Heart left ventricle (tissue), 16 donors: ENCODE measurements at regions of chr3 and their contacts with region 1.

Region 1: GRCh38 chr3:159964166-159964973 is 24.3 kb upstream of the IL12A start:
- DNase-seq: no peak
- ATAC-seq: no peak
- H3K4me3 ChIP-seq: no peak overlapping the region
- H3K27ac ChIP-seq: no peak overlapping the region
- H3K4me1 ChIP-seq: peaks cover 0 to 3% (median 0%) of the 10 kb centered on the region in 12 donors
- H3K27me3 ChIP-seq: no peaks in the 10 kb centered on the region
- CTCF ChIP-seq: no peak
- POLR2A ChIP-seq: no peak

Region 2: DNA sequence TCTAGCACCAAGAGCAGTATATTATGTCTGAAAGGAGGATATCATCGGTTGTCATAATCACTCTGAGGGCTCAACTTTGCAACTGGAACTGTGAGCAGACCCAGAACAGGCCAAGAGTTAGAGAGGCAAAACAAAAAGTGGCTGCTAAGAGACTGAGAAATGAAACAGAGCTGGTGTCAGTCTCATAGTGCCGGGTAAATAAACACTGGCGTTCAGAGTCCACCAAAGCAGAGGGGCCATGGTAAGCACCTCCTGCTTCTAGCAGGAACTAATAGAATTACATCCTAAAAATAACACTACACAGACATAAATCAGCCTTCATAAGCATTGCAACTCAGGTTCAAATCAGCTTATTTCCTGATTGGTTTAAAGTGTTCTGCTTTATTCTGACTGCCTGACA is 14.0 kb after region 1 on chr3:
- intact Hi-C with region 1: loop called in 1 of 10 experiments (anchors 1 kb)
- DNase-seq: peak in 4 of 5 donors; percentile 29 to 66 (median 50)
- ATAC-seq: peak; percentile 98 to 100 (median 99)
- H3K4me3 ChIP-seq: no peak overlapping the region
- H3K27ac ChIP-seq: peak overlapping the region; percentile 5 to 77 (median 59)
- H3K4me1 ChIP-seq: peaks cover 0 to 8% (median 0%) of the 10 kb centered on the region in 12 donors
- H3K27me3 ChIP-seq: no peaks in the 10 kb centered on the region
- CTCF ChIP-seq: no peak
- POLR2A ChIP-seq: no peak

Region 3: DNA sequence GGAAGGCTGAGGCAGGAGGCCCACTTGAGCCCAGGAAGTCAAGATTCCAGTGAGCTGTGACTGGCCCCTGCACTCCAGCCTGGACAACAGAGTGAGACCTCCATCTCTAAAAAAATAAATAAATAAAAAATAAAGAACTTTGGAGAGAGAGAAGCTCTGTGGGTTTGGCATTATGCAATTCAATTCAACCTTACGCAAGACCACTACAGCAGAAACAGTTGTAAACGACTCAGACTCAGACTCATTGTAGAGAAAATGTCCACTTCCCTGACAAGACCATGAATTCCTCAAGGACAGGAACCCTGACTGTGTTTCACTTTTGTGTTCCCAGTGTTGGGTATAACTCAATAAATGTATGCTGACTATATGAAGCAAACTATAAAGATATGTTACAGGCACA is 170.6 kb after region 1 on chr3:
- intact Hi-C with region 1: no loop called
- DNase-seq: no peak
- ATAC-seq: peak in 1 of 4 donors; percentile 37
- H3K4me3 ChIP-seq: no peak overlapping the region
- H3K27ac ChIP-seq: peak overlapping the region in 1 of 12 donors; percentile 25
- H3K4me1 ChIP-seq: peaks cover 0 to 25% (median 0%) of the 10 kb centered on the region in 12 donors
- H3K27me3 ChIP-seq: no peaks in the 10 kb centered on the region
- CTCF ChIP-seq: no peak
- POLR2A ChIP-seq: no peak